ENCODE measurements at regions of chr4 and their contacts with region 1.

Region 1: GRCh38 chr4:44425614-44426208 is 22.9 kb downstream of the KCTD8 start:
- DNase-seq: no peak
- ATAC-seq: no peak
- H3K4me3 ChIP-seq: no peak overlapping the region
- H3K27ac ChIP-seq: no peak overlapping the region
- H3K4me1 ChIP-seq: no peaks in the 10 kb centered on the region
- H3K27me3 ChIP-seq: no peaks in the 10 kb centered on the region
- CTCF ChIP-seq: peak; percentile 55

Region 2: DNA sequence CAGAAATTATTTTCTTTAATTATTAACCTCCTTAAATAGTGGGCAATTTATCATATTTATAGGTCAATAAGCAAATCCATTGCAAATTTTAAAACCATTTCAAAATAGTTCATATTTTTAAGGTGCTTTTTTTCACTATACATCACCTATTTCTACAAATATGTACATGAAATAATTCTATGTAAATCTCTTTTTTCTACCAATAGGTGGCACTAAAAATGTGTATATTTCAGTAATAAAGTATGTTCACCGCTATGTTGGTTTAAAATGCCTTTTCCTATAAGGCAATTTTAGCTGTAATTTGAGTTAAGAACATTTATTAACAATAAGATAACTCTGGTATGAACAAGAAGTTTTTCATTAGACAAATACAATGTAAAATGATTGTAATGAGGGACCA is 649.3 kb before region 1 on chr4:
- CTCF ChIA-PET with region 1: no interaction called
- POLR2A ChIA-PET with region 1: no interaction called
- in situ Hi-C with region 1: no loop called
- intact Hi-C with region 1: loop called (anchors 10 kb)
- DNase-seq: no peak
- ATAC-seq: no peak
- H3K4me3 ChIP-seq: no peak overlapping the region
- H3K27ac ChIP-seq: no peak overlapping the region
- H3K4me1 ChIP-seq: no peaks in the 10 kb centered on the region
- H3K27me3 ChIP-seq: no peaks in the 10 kb centered on the region
- CTCF ChIP-seq: no peak

Measured in Panc1 (cell line).